CD4-positive, alpha-beta memory T cell (primary cell): ENCODE measurements at regions of chr22 and their contacts with region 1.

Region 1: GRCh38 chr22:40533712-40534378 is 102.7 kb downstream of the MRTFA start:
- DNase-seq: peak; percentile 71 to 83 (median 77)
- H3K4me3 ChIP-seq: peak overlapping the region; percentile 32 to 61
- H3K4me3 Mint-ChIP-seq: peak overlapping the region; percentile 81 to 93 (median 87)
- H3K27ac ChIP-seq: peak overlapping the region; percentile 50
- H3K27ac Mint-ChIP-seq: peak overlapping the region; percentile 86 to 94 (median 92)
- H3K4me1 ChIP-seq: peaks cover 67% of the 10 kb centered on the region
- H3K4me1 Mint-ChIP-seq: peaks cover 49 to 64% (median 60%) of the 10 kb centered on the region in 4 donors
- H3K27me3 ChIP-seq: no peaks in the 10 kb centered on the region
- H3K27me3 Mint-ChIP-seq: no peaks in the 10 kb centered on the region

Region 2: GRCh38 chr22:40247976-40248375 is 285.9 kb before region 1 on chr22:
- CTCF ChIA-PET with region 1: no interaction called
- POLR2A ChIA-PET with region 1: no interaction called
- intact Hi-C with region 1: no loop called
- DNase-seq: peak; percentile 76 to 83 (median 81)
- H3K4me3 ChIP-seq: no peak overlapping the region
- H3K4me3 Mint-ChIP-seq: peak overlapping the region; percentile 67 to 85 (median 76)
- H3K27ac ChIP-seq: no peak overlapping the region
- H3K27ac Mint-ChIP-seq: peak overlapping the region; percentile 80 to 97 (median 93)
- H3K4me1 ChIP-seq: peaks cover 84% of the 10 kb centered on the region
- H3K4me1 Mint-ChIP-seq: peaks cover 59 to 87% (median 71%) of the 10 kb centered on the region in 4 donors
- H3K27me3 ChIP-seq: no peaks in the 10 kb centered on the region
- H3K27me3 Mint-ChIP-seq: no peaks in the 10 kb centered on the region

Region 3: GRCh38 chr22:40348025-40348658 is 185.7 kb before region 1 on chr22:
- CTCF ChIA-PET with region 1: no interaction called
- POLR2A ChIA-PET with region 1: no interaction called
- intact Hi-C with region 1: no loop called
- DNase-seq: peak; percentile 68 to 78 (median 69)
- H3K4me3 ChIP-seq: peak overlapping the region in 1 of 2 donors; percentile 95
- H3K4me3 Mint-ChIP-seq: peak overlapping the region; percentile 92 to 99 (median 98)
- H3K27ac ChIP-seq: peak overlapping the region; percentile 81
- H3K27ac Mint-ChIP-seq: peak overlapping the region; percentile 92 to 99 (median 97)
- H3K4me1 ChIP-seq: peaks cover 46% of the 10 kb centered on the region
- H3K4me1 Mint-ChIP-seq: peaks cover 24 to 59% (median 35%) of the 10 kb centered on the region in 4 donors
- H3K27me3 ChIP-seq: no peaks in the 10 kb centered on the region
- H3K27me3 Mint-ChIP-seq: no peaks in the 10 kb centered on the region

Region 4: GRCh38 chr22:40519284-40519947 is 14.4 kb before region 1 on chr22:
- CTCF ChIA-PET with region 1: interaction called, 29 read pairs
- POLR2A ChIA-PET with region 1: interaction called, 40 read pairs
- intact Hi-C with region 1: no loop called
- DNase-seq: peak in 4 of 5 donors; percentile 48 to 62 (median 56)
- H3K4me3 ChIP-seq: peak overlapping the region; percentile 44 to 45
- H3K4me3 Mint-ChIP-seq: peak overlapping the region; percentile 75 to 89 (median 82)
- H3K27ac ChIP-seq: peak overlapping the region; percentile 55
- H3K27ac Mint-ChIP-seq: peak overlapping the region; percentile 87 to 97 (median 94)
- H3K4me1 ChIP-seq: peaks cover 28% of the 10 kb centered on the region
- H3K4me1 Mint-ChIP-seq: peaks cover 21 to 43% (median 28%) of the 10 kb centered on the region in 4 donors
- H3K27me3 ChIP-seq: no peaks in the 10 kb centered on the region
- H3K27me3 Mint-ChIP-seq: no peaks in the 10 kb centered on the region

Region 5: DNA sequence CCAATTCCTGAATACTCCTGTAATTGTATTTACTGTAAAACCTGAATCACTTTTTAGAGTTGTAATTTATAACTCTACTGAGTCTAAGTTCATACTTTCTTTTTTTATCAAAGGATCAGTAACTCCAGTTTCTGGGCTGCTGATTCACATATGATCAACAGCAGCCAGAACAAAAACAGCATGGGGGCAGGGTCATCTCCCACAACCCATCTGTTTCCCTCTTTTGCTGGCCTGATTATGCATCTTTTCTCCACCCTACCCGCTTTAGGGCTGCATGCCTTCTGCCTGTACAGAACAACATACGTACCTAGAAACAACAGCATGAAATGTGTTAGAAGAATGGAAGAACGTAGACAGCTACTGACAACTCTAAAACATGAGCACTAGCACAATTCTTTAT is 26.7 kb after region 1 on chr22:
- CTCF ChIA-PET with region 1: no interaction called
- POLR2A ChIA-PET with region 1: no interaction called
- intact Hi-C with region 1: no loop called
- DNase-seq: no peak
- H3K4me3 ChIP-seq: no peak overlapping the region
- H3K4me3 Mint-ChIP-seq: no peak overlapping the region
- H3K27ac ChIP-seq: no peak overlapping the region
- H3K27ac Mint-ChIP-seq: peak overlapping the region in 2 of 7 donors; percentile 7 to 41
- H3K4me1 ChIP-seq: no peaks in the 10 kb centered on the region
- H3K4me1 Mint-ChIP-seq: peaks cover 6 to 25% (median 10%) of the 10 kb centered on the region in 4 donors
- H3K27me3 ChIP-seq: no peaks in the 10 kb centered on the region
- H3K27me3 Mint-ChIP-seq: no peaks in the 10 kb centered on the region

Region 6: DNA sequence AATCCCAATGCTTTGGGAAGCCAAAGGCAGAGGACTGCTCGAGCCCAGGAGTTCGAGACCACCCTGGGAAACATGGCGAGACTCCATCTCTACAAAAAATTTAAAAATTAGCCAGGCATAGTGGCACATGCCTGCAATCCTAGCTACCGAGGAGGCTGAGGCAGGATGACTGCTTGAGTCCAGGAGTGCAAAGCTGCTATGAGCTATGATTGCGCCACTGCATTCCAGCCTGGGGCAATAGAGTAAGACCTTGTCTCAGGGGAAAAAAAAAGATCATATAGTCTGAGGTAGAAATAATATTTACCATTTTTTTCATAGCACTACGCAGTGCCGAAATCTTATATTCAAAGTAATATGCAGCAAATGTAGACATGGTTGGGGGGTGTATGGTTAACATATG is 54.9 kb after region 1 on chr22:
- CTCF ChIA-PET with region 1: no interaction called
- POLR2A ChIA-PET with region 1: no interaction called
- intact Hi-C with region 1: loop called (anchors 10 kb)
- DNase-seq: no peak
- H3K4me3 ChIP-seq: no peak overlapping the region
- H3K4me3 Mint-ChIP-seq: no peak overlapping the region
- H3K27ac ChIP-seq: no peak overlapping the region
- H3K27ac Mint-ChIP-seq: no peak overlapping the region
- H3K4me1 ChIP-seq: no peaks in the 10 kb centered on the region
- H3K4me1 Mint-ChIP-seq: peaks cover 16 to 21% (median 19%) of the 10 kb centered on the region in 4 donors
- H3K27me3 ChIP-seq: no peaks in the 10 kb centered on the region
- H3K27me3 Mint-ChIP-seq: no peaks in the 10 kb centered on the region

Region 7: GRCh38 chr22:40703174-40703573 is 169.3 kb after region 1 on chr22:
- CTCF ChIA-PET with region 1: no interaction called
- POLR2A ChIA-PET with region 1: no interaction called
- intact Hi-C with region 1: no loop called
- DNase-seq: no peak
- H3K4me3 ChIP-seq: no peak overlapping the region
- H3K4me3 Mint-ChIP-seq: peak overlapping the region in 1 of 8 donors; percentile 22
- H3K27ac ChIP-seq: no peak overlapping the region
- H3K27ac Mint-ChIP-seq: peak overlapping the region in 1 of 7 donors; percentile 31
- H3K4me1 ChIP-seq: peaks cover 5% of the 10 kb centered on the region
- H3K4me1 Mint-ChIP-seq: peaks cover 9 to 15% (median 13%) of the 10 kb centered on the region in 4 donors
- H3K27me3 ChIP-seq: no peaks in the 10 kb centered on the region
- H3K27me3 Mint-ChIP-seq: no peaks in the 10 kb centered on the region